Calu3 (cell line): ENCODE measurements at regions of chr7 and their contacts with region 1.

Region 1: GRCh38 chr7:119175911-119176627 is 951.6 kb downstream of the ANKRD7 start:
- DNase-seq: peak; percentile 66
- H3K4me3 Mint-ChIP-seq: no peak overlapping the region
- H3K27ac Mint-ChIP-seq: no peak overlapping the region
- H3K4me1 Mint-ChIP-seq: no peaks in the 10 kb centered on the region
- H3K27me3 Mint-ChIP-seq: no peaks in the 10 kb centered on the region
- CTCF ChIP-seq: peak; percentile 85

Region 2: GRCh38 chr7:118250860-118251494 is 925.1 kb before region 1 on chr7:
- CTCF ChIA-PET with region 1: no interaction called
- intact Hi-C with region 1: loop called (anchors 10 kb)
- DNase-seq: no peak
- H3K4me3 Mint-ChIP-seq: no peak overlapping the region
- H3K27ac Mint-ChIP-seq: no peak overlapping the region
- H3K4me1 Mint-ChIP-seq: no peaks in the 10 kb centered on the region
- H3K27me3 Mint-ChIP-seq: no peaks in the 10 kb centered on the region
- CTCF ChIP-seq: peak; percentile 32

Region 3: DNA sequence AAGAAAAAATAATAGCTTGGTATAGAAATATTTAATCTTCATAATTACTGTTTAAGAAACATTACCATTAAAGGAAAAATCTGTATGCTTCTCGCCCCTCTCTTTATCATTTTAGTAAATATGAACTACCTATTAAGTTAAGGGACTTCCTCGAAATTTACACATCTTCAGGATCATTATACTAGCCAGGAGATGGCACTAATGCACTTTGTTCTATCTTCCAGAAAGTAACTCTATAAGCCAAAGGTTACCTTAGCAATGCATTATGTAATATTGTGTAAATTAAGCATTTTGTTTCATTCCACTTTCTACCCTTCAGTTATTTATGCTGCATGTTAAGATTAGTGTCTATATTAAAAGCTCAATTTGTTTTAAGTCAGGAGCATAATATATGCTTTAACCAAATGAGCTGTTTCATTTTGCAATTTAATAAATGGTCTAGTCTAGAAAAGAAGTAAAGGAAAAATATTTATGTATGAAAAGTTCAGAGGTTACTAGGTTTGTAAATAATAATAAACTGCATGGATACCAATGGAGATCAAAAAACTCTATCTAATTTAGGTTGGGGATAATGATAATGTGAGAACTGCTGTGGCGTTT is 823.1 kb before region 1 on chr7:
- CTCF ChIA-PET with region 1: no interaction called
- intact Hi-C with region 1: loop called (anchors 2 kb)
- DNase-seq: no peak
- H3K4me3 Mint-ChIP-seq: no peak overlapping the region
- H3K27ac Mint-ChIP-seq: no peak overlapping the region
- H3K4me1 Mint-ChIP-seq: peaks cover 20% of the 10 kb centered on the region
- H3K27me3 Mint-ChIP-seq: no peaks in the 10 kb centered on the region
- CTCF ChIP-seq: peak; percentile 23

Region 4: GRCh38 chr7:118872568-118872967 is 303.5 kb before region 1 on chr7:
- CTCF ChIA-PET with region 1: no interaction called
- intact Hi-C with region 1: loop called (anchors 2 kb)
- DNase-seq: peak; percentile 4
- H3K4me3 Mint-ChIP-seq: no peak overlapping the region
- H3K27ac Mint-ChIP-seq: no peak overlapping the region
- H3K4me1 Mint-ChIP-seq: peaks cover 11% of the 10 kb centered on the region
- H3K27me3 Mint-ChIP-seq: no peaks in the 10 kb centered on the region
- CTCF ChIP-seq: no peak

Region 5: DNA sequence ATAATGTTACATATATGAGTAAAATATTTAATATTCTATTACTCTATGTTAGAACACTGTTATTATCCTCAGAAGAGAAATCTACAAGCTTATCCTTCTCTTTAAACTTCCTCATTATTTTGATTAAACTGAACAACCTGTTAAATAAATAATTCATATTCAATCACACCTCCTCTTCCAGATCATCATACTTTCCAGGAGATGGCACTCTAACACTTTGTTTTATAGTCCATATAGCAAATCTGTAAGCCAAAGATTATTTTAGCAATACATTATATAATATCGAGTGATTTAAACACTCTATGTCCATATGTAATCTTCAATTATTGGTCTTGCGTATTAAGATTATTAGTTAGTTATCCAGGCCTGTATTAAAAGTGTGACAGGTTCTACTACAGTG is 257.5 kb before region 1 on chr7:
- CTCF ChIA-PET with region 1: interaction called, 4 read pairs
- intact Hi-C with region 1: loop called (anchors 1 kb)
- DNase-seq: no peak
- H3K4me3 Mint-ChIP-seq: no peak overlapping the region
- H3K27ac Mint-ChIP-seq: no peak overlapping the region
- H3K4me1 Mint-ChIP-seq: no peaks in the 10 kb centered on the region
- H3K27me3 Mint-ChIP-seq: no peaks in the 10 kb centered on the region
- CTCF ChIP-seq: peak; percentile 26

Region 6: DNA sequence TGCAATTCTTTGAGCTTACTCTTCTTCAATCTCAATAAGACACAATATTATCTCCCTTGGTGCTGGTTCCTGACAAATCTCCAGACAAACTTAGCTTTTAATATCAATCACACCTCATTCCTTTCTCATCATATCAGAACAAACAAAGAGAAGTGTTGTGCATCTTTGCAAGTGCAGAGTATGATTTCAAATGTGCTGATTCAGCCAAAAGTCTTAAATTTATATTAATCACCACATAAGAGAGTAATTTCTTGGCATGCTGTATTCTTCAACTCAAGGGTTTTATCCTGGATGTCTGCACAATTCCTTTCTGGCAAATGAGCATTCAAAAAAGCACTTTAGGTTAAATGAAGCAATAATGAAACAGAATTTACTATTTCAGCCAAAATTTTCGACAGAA is 73.8 kb before region 1 on chr7:
- CTCF ChIA-PET with region 1: no interaction called
- intact Hi-C with region 1: loop called (anchors 5 kb)
- DNase-seq: no peak
- H3K4me3 Mint-ChIP-seq: no peak overlapping the region
- H3K27ac Mint-ChIP-seq: no peak overlapping the region
- H3K4me1 Mint-ChIP-seq: peaks cover 38% of the 10 kb centered on the region
- H3K27me3 Mint-ChIP-seq: no peaks in the 10 kb centered on the region
- CTCF ChIP-seq: no peak